ENCODE measurements at regions of chr1 and their contacts with region 1.

Region 1: GRCh38 chr1:27154991-27155781 is at the start of gene SLC9A1:
- DNase-seq: peak; percentile 96
- ATAC-seq: peak; percentile 91 to 97 (median 93)
- H3K4me3 ChIP-seq: peak within 1 kb of the TSS; percentile 88
- H3K4me3 Mint-ChIP-seq: peak within 1 kb of the TSS; percentile 95
- H3K27ac ChIP-seq: peak within 1 kb of the TSS; percentile 91
- H3K27ac Mint-ChIP-seq: peak within 1 kb of the TSS; percentile 96 to 98
- H3K4me1 ChIP-seq: peaks cover 36% of the 10 kb centered on the region
- H3K4me1 Mint-ChIP-seq: peaks cover 40 to 48% of the 10 kb centered on the region in 2 donors
- H3K27me3 ChIP-seq: no peaks in the 10 kb centered on the region
- H3K27me3 Mint-ChIP-seq: no peaks in the 10 kb centered on the region
- CTCF ChIP-seq: peak; percentile 79
- total RNA-seq, gene SLC9A1: 26.5 to 37.4 (median 29.4) TPM

Region 2: DNA sequence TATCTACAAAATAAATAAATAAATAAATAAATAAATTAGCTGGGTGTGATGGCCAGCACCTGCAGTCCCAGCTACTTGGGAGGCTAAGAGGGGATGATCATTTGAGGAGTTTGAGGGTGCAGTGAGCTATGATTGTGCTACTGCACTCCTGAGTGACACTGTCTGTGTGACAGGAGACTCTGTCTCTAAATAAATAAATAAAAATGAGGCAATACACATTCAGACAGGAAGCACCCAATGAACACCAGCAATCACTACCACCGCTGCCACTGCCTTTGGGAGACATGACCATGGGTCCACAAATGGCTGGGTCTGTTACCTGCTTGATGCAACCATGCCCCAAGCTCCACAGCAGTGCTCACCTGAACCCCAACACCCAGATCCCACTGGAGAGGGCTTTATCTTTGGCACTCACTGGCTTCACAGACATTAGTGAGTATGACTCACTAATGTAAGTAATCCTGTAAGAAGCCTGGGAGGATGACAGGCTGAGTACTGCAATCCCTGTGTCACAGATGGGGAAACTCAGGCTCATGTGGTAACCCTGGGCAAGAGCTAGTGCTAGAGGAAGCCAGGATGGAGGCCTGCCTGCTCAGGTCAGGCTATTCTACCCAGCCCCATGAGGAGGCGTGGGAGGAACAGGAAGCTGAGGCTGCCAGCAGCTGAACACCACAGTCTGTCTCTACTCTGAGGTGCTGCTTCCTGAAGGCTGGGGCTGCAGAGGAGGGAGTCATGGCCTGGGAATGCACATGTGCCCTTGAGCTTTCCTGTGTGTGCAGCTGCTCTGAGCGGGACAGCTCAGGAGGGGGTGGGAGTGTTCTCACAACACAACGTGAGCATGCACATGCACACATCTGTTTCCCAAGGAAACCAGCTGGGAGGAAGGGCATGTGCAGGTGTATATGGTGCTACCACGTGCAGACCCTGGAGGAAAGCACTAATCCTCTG is 43.3 kb before region 1 on chr1:
- intact Hi-C with region 1: loop called (anchors 2 kb)
- DNase-seq: peak; percentile 50 to 85
- ATAC-seq: peak; percentile 94 to 99 (median 94)
- H3K4me3 ChIP-seq: no peak overlapping the region
- H3K4me3 Mint-ChIP-seq: peak overlapping the region; percentile 55
- H3K27ac ChIP-seq: peak overlapping the region; percentile 19
- H3K27ac Mint-ChIP-seq: peak overlapping the region; percentile 84
- H3K4me1 ChIP-seq: peaks cover 25% of the 10 kb centered on the region
- H3K4me1 Mint-ChIP-seq: peaks cover 22 to 36% of the 10 kb centered on the region in 2 donors
- H3K27me3 ChIP-seq: no peaks in the 10 kb centered on the region
- H3K27me3 Mint-ChIP-seq: no peaks in the 10 kb centered on the region
- CTCF ChIP-seq: peak; percentile 18

Region 3: DNA sequence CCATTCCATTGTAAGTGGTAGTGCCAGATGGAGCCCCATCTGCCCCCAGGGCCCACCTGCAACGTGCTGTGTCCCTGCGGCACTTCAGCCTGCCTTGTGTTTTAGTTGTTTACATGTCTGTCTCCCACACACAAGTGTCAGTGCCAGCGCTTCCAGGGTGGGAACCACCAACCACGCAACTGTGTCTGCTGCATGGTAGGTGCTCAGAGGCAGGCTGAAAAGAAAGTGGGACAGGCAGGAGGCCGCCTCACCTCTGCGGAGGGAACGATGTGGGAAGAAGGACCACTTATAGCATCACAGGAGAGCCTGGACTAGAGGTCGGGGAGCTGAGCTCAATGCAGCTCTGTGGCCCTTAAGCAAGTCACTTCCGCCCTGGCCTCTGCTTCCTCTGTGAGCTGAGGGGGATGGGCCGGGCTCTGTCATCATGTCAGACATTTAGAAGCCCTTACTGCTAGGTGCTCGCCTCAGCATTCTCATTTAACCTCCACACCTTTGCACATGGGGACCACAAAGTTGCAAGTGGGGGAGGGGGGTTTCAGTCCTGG is 18.1 kb before region 1 on chr1:
- intact Hi-C with region 1: loop called (anchors 1 kb)
- DNase-seq: peak; percentile 75 to 88
- ATAC-seq: peak; percentile 87 to 91 (median 88)
- H3K4me3 ChIP-seq: peak overlapping the region; percentile 18
- H3K4me3 Mint-ChIP-seq: peak overlapping the region; percentile 90
- H3K27ac ChIP-seq: peak overlapping the region; percentile 94
- H3K27ac Mint-ChIP-seq: peak overlapping the region; percentile 99 to 100
- H3K4me1 ChIP-seq: peaks cover 30% of the 10 kb centered on the region
- H3K4me1 Mint-ChIP-seq: peaks cover 41 to 48% of the 10 kb centered on the region in 2 donors
- H3K27me3 ChIP-seq: no peaks in the 10 kb centered on the region
- H3K27me3 Mint-ChIP-seq: no peaks in the 10 kb centered on the region
- CTCF ChIP-seq: no peak

Region 4: DNA sequence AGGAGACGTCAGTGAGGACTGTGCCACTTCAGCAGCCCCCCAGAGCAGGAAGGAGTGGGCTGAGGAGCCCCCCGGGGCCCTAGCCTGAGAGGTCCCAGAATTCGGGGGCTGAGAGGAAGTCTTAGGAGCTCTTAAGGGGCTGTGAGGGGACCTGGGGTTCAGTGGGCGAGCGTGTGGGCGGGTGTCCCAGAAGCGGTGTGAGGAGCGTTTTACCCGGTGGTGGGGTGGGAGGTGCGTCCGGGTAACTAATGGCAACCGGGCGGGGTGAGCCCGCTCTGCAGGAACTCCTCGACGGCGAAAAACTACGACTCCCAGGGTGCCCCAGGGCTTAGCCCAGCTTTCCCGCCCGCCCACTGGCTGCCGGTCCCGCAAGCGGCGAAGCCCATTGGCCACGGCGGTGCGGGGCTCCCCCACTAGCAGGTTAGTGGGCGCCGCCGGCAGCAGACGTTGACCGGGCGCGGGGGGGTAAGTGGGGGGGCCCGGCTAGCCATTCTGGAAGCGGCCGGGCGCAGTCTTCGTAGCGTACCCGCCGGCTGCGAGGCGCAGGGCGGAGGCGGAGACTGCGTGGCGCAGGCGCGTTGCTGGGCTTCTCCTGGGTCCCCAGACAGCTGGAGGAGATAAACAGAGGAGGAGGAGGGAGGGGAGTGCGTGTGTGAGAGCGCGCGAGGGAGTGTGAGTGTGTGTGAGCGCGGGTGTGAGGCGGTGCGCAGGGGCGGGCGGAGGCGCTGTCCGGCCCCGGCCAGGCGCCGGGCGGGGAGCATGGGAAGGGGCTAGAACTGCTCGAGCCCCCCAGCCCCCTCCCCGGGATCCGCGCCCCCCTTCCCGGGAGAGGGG is 79.1 kb after region 1 on chr1 and contains the start of gene WDTC1:
- intact Hi-C with region 1: loop called (anchors 2 kb)
- DNase-seq: peak; percentile 96 to 98
- ATAC-seq: peak; percentile 83 to 95 (median 90)
- H3K4me3 ChIP-seq: peak within 1 kb of the TSS; percentile 62
- H3K4me3 Mint-ChIP-seq: peak within 1 kb of the TSS; percentile 99
- H3K27ac ChIP-seq: peak within 1 kb of the TSS; percentile 91
- H3K27ac Mint-ChIP-seq: peak within 1 kb of the TSS; percentile 93 to 97
- H3K4me1 ChIP-seq: peaks cover 29% of the 10 kb centered on the region
- H3K4me1 Mint-ChIP-seq: peaks cover 32 to 41% of the 10 kb centered on the region in 2 donors
- H3K27me3 ChIP-seq: no peaks in the 10 kb centered on the region
- H3K27me3 Mint-ChIP-seq: no peaks in the 10 kb centered on the region
- CTCF ChIP-seq: no peak
- total RNA-seq, gene WDTC1: 68.9 to 82.0 (median 81.7) TPM